Activated T-helper 2 cell treated with anti-CD3 and anti-CD28 coated beads, Interferon-gamma antibody, Interleukin-2, Interleukin-4, amounts not matched to agents 10 μg/mL and 5 μg/mL and 100 μg/mL, durations not matched to agents 14 hours and 24 hours and 36 hours (primary cell): ENCODE measurements at regions of chr3 and their contacts with region 1.

Region 1: GRCh38 chr3:77038468-77038929 is 1.4 kb upstream of the ROBO2 start:
- DNase-seq: no peak
- H3K4me3 Mint-ChIP-seq: no peak overlapping the region
- H3K27ac Mint-ChIP-seq: no peak overlapping the region
- H3K4me1 Mint-ChIP-seq: no peaks in the 10 kb centered on the region
- H3K27me3 Mint-ChIP-seq: peaks cover 22% of the 10 kb centered on the region

Region 2: DNA sequence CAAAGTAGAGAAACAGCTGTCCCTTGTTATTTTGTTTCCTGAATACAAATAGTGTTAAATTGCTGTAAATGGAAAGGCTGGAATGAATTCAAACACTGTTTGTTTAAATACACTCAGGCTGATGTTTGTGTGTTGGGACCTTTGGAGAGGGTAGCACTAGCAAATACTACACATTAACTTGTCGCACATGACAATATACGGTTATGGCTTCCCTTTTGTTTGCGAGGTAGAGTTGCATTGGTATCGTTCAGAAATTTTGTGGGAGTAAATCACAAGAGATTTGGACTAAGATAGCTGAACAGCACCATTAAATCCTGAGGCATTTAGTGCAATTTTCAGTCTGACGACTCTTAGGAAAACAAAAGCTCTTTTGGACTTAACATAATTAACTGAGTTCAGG is 211.6 kb before region 1 on chr3:
- intact Hi-C with region 1: no loop called
- DNase-seq: no peak
- H3K4me3 Mint-ChIP-seq: no peak overlapping the region
- H3K27ac Mint-ChIP-seq: no peak overlapping the region
- H3K4me1 Mint-ChIP-seq: no peaks in the 10 kb centered on the region
- H3K27me3 Mint-ChIP-seq: no peaks in the 10 kb centered on the region

Region 3: DNA sequence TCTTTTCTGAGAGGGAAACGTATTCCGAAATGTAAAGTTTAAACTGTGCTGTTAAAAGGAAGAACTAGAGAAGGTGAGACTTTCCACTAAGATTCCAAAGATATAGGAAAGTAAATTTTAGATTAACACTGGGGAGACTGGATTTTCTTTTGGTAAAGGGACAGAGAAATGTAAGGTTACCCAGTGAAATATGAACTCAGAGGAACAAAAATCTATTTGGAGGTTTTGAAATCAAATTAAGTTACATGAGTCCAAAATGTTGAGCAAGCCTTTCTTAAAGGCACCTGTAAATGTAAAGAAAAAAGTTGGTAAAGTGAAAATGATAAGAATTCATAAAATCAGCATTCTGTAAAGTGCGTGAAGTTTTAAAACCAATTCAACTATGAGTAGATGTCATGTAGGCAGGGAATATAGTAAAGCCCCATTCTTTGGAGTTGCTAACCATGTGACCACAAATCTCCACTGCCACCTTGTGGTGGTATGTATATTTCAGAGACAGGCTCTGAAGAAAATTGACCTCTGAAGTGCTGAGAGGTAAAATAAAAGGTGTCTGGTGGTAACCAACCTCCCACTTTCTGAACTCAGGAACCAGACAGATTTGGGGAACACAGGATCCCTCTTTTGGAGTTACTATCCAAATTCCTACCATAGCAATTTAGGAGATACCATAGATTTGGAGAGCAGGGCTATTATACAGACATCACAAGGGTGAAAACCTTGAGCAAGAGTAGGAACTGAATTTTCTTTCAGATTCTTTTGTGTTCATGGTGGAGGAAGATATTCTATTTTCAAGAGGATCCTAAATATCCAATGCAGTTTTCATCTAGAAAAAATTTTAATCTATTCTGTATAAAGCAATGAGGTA is 216.7 kb after region 1 on chr3:
- intact Hi-C with region 1: loop called (anchors 10 kb)
- DNase-seq: no peak
- H3K4me3 Mint-ChIP-seq: no peak overlapping the region
- H3K27ac Mint-ChIP-seq: no peak overlapping the region
- H3K4me1 Mint-ChIP-seq: no peaks in the 10 kb centered on the region
- H3K27me3 Mint-ChIP-seq: no peaks in the 10 kb centered on the region

Region 4: GRCh38 chr3:77530870-77531269 is 492.4 kb after region 1 on chr3:
- intact Hi-C with region 1: no loop called
- DNase-seq: no peak
- H3K4me3 Mint-ChIP-seq: no peak overlapping the region
- H3K27ac Mint-ChIP-seq: no peak overlapping the region
- H3K4me1 Mint-ChIP-seq: no peaks in the 10 kb centered on the region
- H3K27me3 Mint-ChIP-seq: no peaks in the 10 kb centered on the region